Left cardiac atrium (tissue), 4 donors: ENCODE measurements at regions of chr10 and their contacts with region 1.

Region 1: DNA sequence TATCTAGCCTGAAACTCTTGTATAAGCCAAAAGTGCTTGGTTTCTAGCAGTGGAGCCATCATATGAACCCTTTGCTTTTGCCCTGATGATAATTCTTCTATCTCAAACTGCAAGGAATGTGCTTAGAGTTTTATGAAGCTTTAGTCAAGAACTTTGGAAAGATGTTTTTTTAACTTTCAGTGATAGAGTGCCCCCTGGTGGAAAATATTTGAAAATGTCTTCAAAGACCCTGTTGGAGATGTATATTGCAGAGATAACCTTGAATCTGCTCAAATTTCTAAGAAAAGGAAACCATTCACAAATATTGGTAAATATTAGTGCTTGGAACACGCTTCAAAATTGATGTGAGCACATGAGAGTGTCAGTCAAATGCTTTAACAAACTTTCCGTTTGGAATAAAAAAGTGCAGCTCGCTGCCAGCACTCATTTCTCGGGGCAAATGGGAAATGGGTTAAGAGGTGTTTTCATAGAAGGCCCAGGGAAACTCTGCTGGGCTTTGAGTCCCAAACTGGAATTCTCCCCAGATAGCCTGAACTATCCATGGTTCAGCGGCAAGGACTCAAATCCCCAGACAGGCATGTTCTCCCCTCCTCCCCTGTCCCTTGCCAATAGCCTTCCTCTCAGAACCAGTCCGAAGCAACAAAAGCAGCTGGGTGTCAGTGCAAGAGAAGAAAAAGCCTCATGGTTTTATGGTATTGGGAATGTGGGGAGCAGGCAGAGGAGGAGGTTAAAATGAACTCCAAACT is 129.3 kb downstream of the MYOF start:
- DNase-seq: no peak
- ATAC-seq: peak in 1 of 2 donors; percentile 30

Region 2: DNA sequence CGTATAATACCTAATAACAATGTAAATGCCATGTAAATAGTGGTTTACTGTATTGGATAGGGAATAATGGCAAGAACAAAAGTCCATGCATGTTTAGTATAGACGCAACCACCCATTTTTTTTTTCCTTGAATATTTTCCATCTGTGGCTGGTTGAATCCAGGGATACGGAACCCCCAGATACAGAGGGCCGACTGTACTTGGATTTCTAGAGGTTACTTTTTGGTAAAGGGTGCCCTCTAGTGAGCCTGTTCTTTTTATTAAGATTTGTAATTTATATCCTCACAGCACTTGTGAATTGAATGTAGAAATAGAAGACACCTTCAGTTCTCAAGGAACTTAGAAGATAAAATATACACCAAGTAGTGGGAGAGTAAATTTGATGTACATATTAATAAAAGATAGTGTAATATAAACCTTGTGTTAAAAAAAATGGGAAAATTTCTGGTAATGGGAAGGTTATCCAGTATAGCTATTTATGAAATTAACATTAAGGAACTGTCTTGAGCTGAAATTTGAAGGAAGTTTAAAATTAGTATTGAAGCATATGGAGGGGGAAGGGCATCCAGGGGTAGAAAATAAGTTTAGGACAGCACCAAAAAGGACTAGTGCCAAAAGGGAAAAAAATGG is 472.5 kb before region 1 on chr10:
- intact Hi-C with region 1: loop called in 1 of 2 experiments (anchors 10 kb)
- DNase-seq: no peak
- ATAC-seq: peak in 1 of 2 donors; percentile 38

Region 3: GRCh38 chr10:93006435-93007039 is 346.3 kb before region 1 on chr10:
- intact Hi-C with region 1: loop called in 1 of 2 experiments (anchors 10 kb)
- DNase-seq: no peak
- ATAC-seq: peak in 1 of 2 donors; percentile 38

Region 4: DNA sequence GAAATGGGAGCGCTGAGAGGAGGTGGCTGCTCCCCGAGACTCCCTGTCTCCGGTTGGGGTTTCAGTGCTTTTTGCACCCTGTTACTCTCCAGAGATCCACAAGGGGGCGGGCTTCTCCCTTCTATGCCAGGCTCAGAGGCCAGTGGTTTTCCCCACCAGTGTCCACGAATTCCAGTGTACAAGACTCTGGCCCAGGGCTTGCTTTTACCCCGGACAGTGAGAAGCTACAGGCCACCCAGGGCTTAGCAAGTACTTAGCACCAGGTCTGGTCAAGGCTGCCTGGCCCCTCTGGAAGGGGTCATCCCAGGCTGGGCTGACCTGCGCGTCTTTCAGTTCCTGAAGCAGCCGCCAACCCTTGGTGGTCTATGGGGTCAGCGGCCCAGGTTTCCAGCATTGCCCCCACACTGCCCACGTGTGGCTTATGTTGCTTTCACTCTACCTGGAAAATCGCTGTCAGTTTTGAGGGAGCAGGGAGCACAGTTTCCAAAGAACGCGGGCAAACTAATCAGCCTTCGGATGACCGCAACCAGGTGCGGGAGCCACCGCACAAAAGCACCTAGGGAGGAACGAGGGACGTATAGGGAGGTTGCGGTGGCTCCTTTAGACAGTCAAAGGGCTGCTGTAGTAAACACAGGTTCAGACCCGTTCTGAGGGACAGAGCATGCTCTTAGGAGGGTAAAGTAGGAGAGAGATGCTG is 272.3 kb before region 1 on chr10:
- intact Hi-C with region 1: loop called (anchors 2 to 10 kb)
- DNase-seq: no peak
- ATAC-seq: peak; percentile 67 to 74

Region 5: DNA sequence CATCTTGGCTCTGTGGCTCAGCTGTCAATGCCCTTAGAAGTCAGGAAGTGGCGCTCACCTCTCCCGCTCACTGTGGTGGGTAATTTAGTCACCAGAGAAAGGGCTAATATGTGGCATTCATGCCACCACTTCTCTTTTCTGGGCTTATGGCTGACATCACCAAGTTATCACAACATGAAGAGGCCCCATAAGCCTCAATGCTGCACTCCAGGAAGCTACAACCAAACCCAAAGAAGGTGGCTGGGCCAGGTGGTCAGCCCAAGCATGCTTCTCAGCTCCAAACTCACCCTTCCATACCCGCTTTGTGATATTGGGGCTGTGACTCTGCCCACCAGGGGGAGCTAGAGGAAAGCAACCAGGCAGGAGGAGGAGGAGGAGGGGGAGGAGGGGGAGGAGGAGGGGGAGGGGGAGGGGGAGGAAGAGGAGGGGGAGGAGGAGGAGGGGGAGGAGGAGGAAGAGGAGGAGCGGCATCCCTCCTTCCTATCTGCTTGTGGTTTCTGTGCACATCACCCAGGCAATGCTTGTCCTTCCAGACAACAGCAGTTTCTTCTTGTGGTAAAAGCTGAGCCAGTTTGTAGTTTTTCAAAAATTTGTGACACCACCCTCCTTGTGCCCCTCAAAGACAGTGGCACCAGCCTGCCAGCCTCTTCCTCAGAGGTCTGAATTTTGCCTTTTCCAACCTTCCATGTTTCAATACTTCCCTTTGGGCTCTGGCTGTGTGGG is 237.0 kb before region 1 on chr10:
- intact Hi-C with region 1: loop called in 1 of 2 experiments (anchors 10 kb)
- DNase-seq: peak; percentile 72
- ATAC-seq: peak; percentile 41 to 53

Region 6: GRCh38 chr10:93422151-93422550 is 69.3 kb after region 1 on chr10:
- intact Hi-C with region 1: no loop called
- DNase-seq: no peak
- ATAC-seq: peak in 1 of 2 donors; percentile 20